Activated CD4-positive, alpha-beta memory T cell treated with anti-CD3 and anti-CD28 coated beads, Interleukin-2, amount 10 ng/mL, durations not matched to agents 7 days and 5 days (primary cell): ENCODE measurements at regions of chr16 and their contacts with region 1.

Region 1: GRCh38 chr16:75099756-75100602 is 16.6 kb downstream of the LDHD start:
- DNase-seq: peak; percentile 66
- H3K4me3 Mint-ChIP-seq: peak overlapping the region; percentile 30
- H3K27ac Mint-ChIP-seq: peak overlapping the region; percentile 84
- H3K4me1 Mint-ChIP-seq: peaks cover 61% of the 10 kb centered on the region
- H3K27me3 Mint-ChIP-seq: no peaks in the 10 kb centered on the region

Region 2: GRCh38 chr16:74998481-74999218 is 101.3 kb before region 1 on chr16 and contains the start of gene ZNRF1:
- CTCF ChIA-PET with region 1: interaction called, 10 read pairs
- POLR2A ChIA-PET with region 1: interaction called, 6 read pairs
- DNase-seq: peak; percentile 83
- H3K4me3 Mint-ChIP-seq: peak within 1 kb of the TSS; percentile 77
- H3K27ac Mint-ChIP-seq: peak within 1 kb of the TSS; percentile 73
- H3K4me1 Mint-ChIP-seq: peaks cover 35% of the 10 kb centered on the region
- H3K27me3 Mint-ChIP-seq: peaks cover 22% of the 10 kb centered on the region
- total RNA-seq, gene ZNRF1: 22.7 to 25.3 TPM

Region 3: GRCh38 chr16:75011634-75012307 is 88.2 kb before region 1 on chr16:
- CTCF ChIA-PET with region 1: no interaction called
- POLR2A ChIA-PET with region 1: interaction called, 11 read pairs
- DNase-seq: peak; percentile 40
- H3K4me3 Mint-ChIP-seq: peak overlapping the region; percentile 64
- H3K27ac Mint-ChIP-seq: peak overlapping the region; percentile 77
- H3K4me1 Mint-ChIP-seq: peaks cover 38% of the 10 kb centered on the region
- H3K27me3 Mint-ChIP-seq: no peaks in the 10 kb centered on the region

Region 4: GRCh38 chr16:75074920-75075687 is 24.9 kb before region 1 on chr16:
- CTCF ChIA-PET with region 1: interaction called, 6 read pairs
- POLR2A ChIA-PET with region 1: interaction called, 40 read pairs
- DNase-seq: peak; percentile 94
- H3K4me3 Mint-ChIP-seq: peak overlapping the region; percentile 33
- H3K27ac Mint-ChIP-seq: peak overlapping the region; percentile 87
- H3K4me1 Mint-ChIP-seq: peaks cover 58% of the 10 kb centered on the region
- H3K27me3 Mint-ChIP-seq: no peaks in the 10 kb centered on the region

Region 5: GRCh38 chr16:75272097-75272551 is 172.1 kb after region 1 on chr16:
- CTCF ChIA-PET with region 1: no interaction called
- POLR2A ChIA-PET with region 1: no interaction called
- DNase-seq: no peak
- H3K4me3 Mint-ChIP-seq: no peak overlapping the region
- H3K27ac Mint-ChIP-seq: no peak overlapping the region
- H3K4me1 Mint-ChIP-seq: no peaks in the 10 kb centered on the region
- H3K27me3 Mint-ChIP-seq: peaks cover 1% of the 10 kb centered on the region